ENCODE measurements at regions of chr17 and their contacts with region 1.

Region 1: GRCh38 chr17:82230627-82231311 is 1.9 kb downstream of the SLC16A3 start:
- DNase-seq: peak; percentile 86
- H3K4me3 Mint-ChIP-seq: peak overlapping the region; percentile 84
- H3K27ac Mint-ChIP-seq: peak overlapping the region; percentile 72
- H3K4me1 Mint-ChIP-seq: no peaks in the 10 kb centered on the region
- H3K27me3 Mint-ChIP-seq: no peaks in the 10 kb centered on the region
- CTCF ChIP-seq: peak; percentile 47

Region 2: GRCh38 chr17:82170412-82170961 is 60.3 kb before region 1 on chr17:
- CTCF ChIA-PET with region 1: no interaction called
- POLR2A ChIA-PET with region 1: no interaction called
- intact Hi-C with region 1: no loop called
- DNase-seq: no peak
- H3K4me3 Mint-ChIP-seq: no peak overlapping the region
- H3K27ac Mint-ChIP-seq: no peak overlapping the region
- H3K4me1 Mint-ChIP-seq: no peaks in the 10 kb centered on the region
- H3K27me3 Mint-ChIP-seq: no peaks in the 10 kb centered on the region
- CTCF ChIP-seq: no peak

Region 3: GRCh38 chr17:82205719-82206508 is 24.9 kb before region 1 on chr17:
- CTCF ChIA-PET with region 1: interaction called, 15 read pairs
- POLR2A ChIA-PET with region 1: interaction called, 44 read pairs
- intact Hi-C with region 1: loop called (anchors 1 kb)
- DNase-seq: peak; percentile 96
- H3K4me3 Mint-ChIP-seq: peak overlapping the region; percentile 64
- H3K27ac Mint-ChIP-seq: peak overlapping the region; percentile 97
- H3K4me1 Mint-ChIP-seq: peaks cover 27% of the 10 kb centered on the region
- H3K27me3 Mint-ChIP-seq: no peaks in the 10 kb centered on the region
- CTCF ChIP-seq: peak; percentile 80

Region 4: GRCh38 chr17:82212331-82213250 is 18.2 kb before region 1 on chr17 and contains the start of gene CCDC57:
- CTCF ChIA-PET with region 1: interaction called, 15 read pairs
- POLR2A ChIA-PET with region 1: interaction called, 40 read pairs
- intact Hi-C with region 1: no loop called
- DNase-seq: peak; percentile 67
- H3K4me3 Mint-ChIP-seq: peak within 1 kb of the TSS; percentile 72
- H3K27ac Mint-ChIP-seq: peak within 1 kb of the TSS; percentile 57
- H3K4me1 Mint-ChIP-seq: peaks cover 26% of the 10 kb centered on the region
- H3K27me3 Mint-ChIP-seq: no peaks in the 10 kb centered on the region
- CTCF ChIP-seq: no peak
- total RNA-seq, gene CCDC57: 86.8 and 87.3 TPM in 2 replicates

Region 5: DNA sequence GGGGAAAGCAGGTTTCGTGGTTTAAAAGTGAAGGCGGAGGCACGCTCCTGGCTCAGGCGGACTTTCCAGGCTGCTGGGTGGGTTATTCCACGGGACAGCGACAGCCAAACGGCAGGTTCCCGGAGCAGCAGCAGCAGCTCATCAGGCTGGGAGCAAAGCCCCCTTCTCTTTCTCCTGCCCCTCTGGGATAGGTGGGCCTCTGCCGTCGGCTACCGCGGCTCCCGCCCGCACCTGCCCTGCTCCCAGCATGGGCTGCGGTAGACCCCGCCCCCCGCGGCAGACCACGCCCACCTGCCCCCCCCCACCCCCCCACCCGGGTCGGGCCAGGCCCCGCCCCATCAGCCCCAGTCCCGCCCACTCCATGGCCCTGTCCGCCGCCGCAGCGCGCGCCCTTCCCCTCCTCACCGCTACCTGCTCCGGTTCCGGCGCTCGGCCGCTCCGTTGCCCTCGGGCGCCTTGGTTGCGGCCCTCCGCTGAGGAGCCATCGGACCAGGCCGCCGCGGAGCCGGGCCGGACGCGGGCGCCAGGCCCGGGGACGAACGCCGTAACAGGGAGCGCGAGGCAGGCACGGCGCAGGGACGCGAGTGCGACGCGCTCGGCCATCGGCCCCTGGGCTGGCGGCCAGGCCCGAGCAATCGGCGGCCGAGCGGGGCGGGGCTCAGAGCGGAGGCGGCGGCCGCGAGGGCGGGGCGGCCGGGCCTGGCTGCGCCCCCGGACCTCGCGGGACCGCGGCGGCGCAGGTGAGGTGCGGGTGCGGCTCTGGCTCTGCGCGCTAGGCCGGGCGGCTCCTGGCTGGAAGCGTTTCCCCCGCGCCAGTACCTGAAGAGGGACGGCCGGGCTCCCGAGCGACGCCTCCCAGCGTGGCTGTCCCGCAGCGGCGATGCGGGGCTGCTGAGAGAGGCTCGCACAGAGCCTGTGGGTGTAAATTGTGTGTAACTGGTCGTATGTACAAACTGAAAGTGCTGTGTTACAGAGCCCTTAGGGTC is 187.5 kb after region 1 on chr17 and contains the starts of genes HEXD and OGFOD3:
- CTCF ChIA-PET with region 1: no interaction called
- POLR2A ChIA-PET with region 1: no interaction called
- intact Hi-C with region 1: no loop called
- DNase-seq: peak; percentile 78
- H3K4me3 Mint-ChIP-seq: peak within 1 kb of the TSS; percentile 71
- H3K27ac Mint-ChIP-seq: no peak within 1 kb of the TSS
- H3K4me1 Mint-ChIP-seq: no peaks in the 10 kb centered on the region
- H3K27me3 Mint-ChIP-seq: no peaks in the 10 kb centered on the region
- CTCF ChIP-seq: no peak
- total RNA-seq, gene HEXD: 14.8 and 16.2 TPM in 2 replicates
- total RNA-seq, gene OGFOD3: 16.5 and 21.1 TPM in 2 replicates

Measured in MCF 10A (cell line).